Activated naive CD4-positive, alpha-beta T cell treated with anti-CD3 and anti-CD28 coated beads for 36 hours (primary cell): ENCODE measurements at regions of chr19 and their contacts with region 1.

Region 1: GRCh38 chr19:38224014-38224862 is at the start of gene DPF1:
- DNase-seq: peak; percentile 51
- H3K4me3 Mint-ChIP-seq: peak within 1 kb of the TSS; percentile 68
- H3K27ac Mint-ChIP-seq: no peak within 1 kb of the TSS
- H3K4me1 Mint-ChIP-seq: peaks cover 25% of the 10 kb centered on the region
- H3K27me3 Mint-ChIP-seq: peaks cover 65% of the 10 kb centered on the region
- total RNA-seq, gene DPF1: 0.41 to 0.77 TPM

Region 2: GRCh38 chr19:38142176-38143035 is 81.8 kb before region 1 on chr19:
- CTCF ChIA-PET with region 1: no interaction called
- intact Hi-C with region 1: loop called (anchors 10 kb)
- DNase-seq: peak; percentile 67
- H3K4me3 Mint-ChIP-seq: no peak overlapping the region
- H3K27ac Mint-ChIP-seq: no peak overlapping the region
- H3K4me1 Mint-ChIP-seq: no peaks in the 10 kb centered on the region
- H3K27me3 Mint-ChIP-seq: no peaks in the 10 kb centered on the region

Region 3: DNA sequence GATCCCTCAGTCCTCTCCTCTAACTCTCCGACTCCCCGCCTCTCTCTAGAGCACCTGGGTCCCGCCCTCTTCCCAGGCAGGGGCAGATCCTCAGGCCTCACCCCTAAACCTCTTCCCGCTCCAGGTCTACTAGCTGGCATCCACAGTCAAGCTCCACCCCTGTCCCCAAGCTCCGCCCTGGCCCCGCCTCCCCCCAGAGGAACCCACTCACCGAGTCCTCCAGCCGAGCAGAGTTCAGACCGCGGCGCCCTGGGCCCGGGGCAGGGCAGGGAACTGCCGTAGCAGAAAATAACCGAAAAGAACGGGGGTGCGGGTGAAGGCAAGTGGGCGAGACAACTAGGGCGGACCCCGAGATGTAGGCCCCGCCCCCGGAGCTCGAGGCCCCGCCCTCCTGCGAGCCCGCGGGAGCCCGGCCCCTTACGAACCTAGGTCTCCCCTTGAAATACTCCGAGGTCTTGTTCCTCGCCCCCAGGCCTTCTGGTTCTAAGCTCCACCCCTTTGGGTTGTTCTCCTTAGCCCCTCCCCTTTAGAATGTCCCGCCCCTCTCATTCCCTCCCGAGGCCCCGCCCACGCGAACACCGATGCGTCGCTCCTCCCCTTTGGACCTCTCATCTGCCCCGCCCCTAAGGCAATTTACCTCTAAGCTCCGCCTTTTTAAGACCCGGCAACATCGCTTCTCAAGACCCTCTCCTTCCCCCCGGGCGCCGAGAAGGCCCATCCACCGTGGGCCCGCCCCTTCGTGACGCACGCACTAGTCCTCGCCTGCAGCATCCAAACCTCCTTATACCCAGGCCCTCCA is 163.5 kb after region 1 on chr19 and contains the start of gene GGN:
- CTCF ChIA-PET with region 1: no interaction called
- intact Hi-C with region 1: loop called (anchors 10 kb)
- DNase-seq: peak; percentile 87
- H3K4me3 Mint-ChIP-seq: peak within 1 kb of the TSS; percentile 78
- H3K27ac Mint-ChIP-seq: no peak within 1 kb of the TSS
- H3K4me1 Mint-ChIP-seq: peaks cover 22% of the 10 kb centered on the region
- H3K27me3 Mint-ChIP-seq: peaks cover 18% of the 10 kb centered on the region
- total RNA-seq, gene GGN: 0.26 to 0.40 TPM

Region 4: DNA sequence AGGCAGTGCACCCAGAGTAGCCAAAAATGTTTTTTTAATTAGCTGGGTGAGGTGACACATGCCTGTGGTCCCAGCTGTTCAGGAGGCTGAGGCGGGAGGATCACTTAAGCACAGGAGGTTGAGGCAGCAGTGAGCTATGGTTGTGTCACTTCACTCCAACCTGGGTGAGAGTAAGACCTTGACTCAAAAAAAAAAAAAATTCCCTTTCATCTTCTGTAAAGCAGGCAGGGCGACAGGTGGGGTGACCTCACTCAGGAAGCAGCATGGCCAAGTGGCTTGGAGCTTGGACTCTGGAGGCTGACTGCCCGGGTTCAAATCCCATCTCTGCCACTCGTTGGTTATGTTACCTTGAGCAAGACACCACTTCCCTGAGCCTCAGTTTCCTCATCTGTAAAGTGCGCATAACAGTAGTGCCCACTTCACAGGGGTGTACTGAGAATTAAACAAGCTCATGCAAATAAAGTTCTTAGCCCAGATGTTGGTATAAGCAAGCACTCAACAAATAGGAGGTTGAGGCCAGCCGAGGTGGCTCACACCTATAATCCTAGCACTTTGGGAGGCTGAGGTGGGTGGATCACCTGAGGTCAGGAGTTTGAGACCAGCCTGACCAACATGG is 345.2 kb after region 1 on chr19:
- CTCF ChIA-PET with region 1: no interaction called
- intact Hi-C with region 1: no loop called
- DNase-seq: no peak
- H3K4me3 Mint-ChIP-seq: no peak overlapping the region
- H3K27ac Mint-ChIP-seq: no peak overlapping the region
- H3K4me1 Mint-ChIP-seq: peaks cover 5% of the 10 kb centered on the region
- H3K27me3 Mint-ChIP-seq: peaks cover 12% of the 10 kb centered on the region